ENCODE measurements at regions of chr5 and their contacts with region 1.

Region 1: GRCh38 chr5:135203593-135204036 is 169.6 kb upstream of the PITX1 start:
- DNase-seq: no peak
- H3K4me3 ChIP-seq: no peak overlapping the region
- H3K27ac ChIP-seq: no peak overlapping the region
- H3K4me1 ChIP-seq: 0 out of 4 replicates have a peak, but pooled peaks cover 0 to 8% of the 10 kb centered on the region in 2 experiments
- H3K27me3 ChIP-seq: no peaks in the 10 kb centered on the region
- CTCF ChIP-seq: peak; percentile 51
- EP300 ChIP-seq: no peak
- RAD21 ChIP-seq: peak; percentile 57

Region 2: DNA sequence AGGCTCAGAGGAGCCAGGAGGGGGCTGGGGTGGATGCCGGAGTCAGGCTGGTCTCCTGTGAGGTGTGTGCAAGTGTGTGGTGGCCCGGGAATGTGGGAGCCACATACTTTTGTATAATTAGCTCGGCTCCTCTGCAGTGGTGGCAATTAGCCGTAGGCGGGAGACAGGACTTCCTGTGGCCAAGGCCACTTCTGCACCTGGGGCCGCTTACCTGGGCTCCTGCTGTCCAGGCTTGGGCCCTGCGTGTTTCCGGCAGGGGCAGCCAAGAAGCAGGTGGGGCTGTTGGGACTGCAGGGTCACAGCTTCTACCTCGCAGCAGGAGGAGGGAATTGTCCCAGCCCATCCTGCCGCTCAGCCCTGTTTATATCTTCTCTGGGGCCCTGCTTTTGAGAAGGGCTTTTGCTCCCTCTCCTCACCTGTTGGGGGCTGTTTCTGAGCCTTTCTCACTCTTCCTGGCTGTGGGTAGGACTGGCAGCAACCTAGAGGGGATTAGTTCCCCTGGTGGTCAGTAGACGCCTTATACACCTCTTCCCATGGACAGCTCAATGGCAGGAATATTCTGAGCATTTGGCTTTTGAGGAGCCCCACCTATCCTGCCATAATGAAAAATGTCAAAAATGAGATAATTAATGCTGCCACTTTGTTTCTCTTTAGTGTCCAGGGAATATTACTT is 24.2 kb before region 1 on chr5:
- CTCF ChIA-PET with region 1: interaction called, 10 read pairs
- POLR2A ChIA-PET with region 1: no interaction called
- DNase-seq: no peak
- H3K4me3 ChIP-seq: no peak overlapping the region
- H3K27ac ChIP-seq: no peak overlapping the region
- H3K4me1 ChIP-seq: no peaks in the 10 kb centered on the region
- H3K27me3 ChIP-seq: no peaks in the 10 kb centered on the region; the same call in 1 of the 2 replicates
- CTCF ChIP-seq: no peak
- EP300 ChIP-seq: no peak
- RAD21 ChIP-seq: no peak

Region 3: GRCh38 chr5:135214897-135215616 is 11.4 kb after region 1 on chr5:
- CTCF ChIA-PET with region 1: interaction called, 11 read pairs
- POLR2A ChIA-PET with region 1: no interaction called
- DNase-seq: peak; percentile 3
- H3K4me3 ChIP-seq: no peak overlapping the region
- H3K27ac ChIP-seq: no peak overlapping the region
- H3K4me1 ChIP-seq: peaks cover 13 to 15% of the 10 kb centered on the region in 2 experiments; a peak in 2 of 4 replicates
- H3K27me3 ChIP-seq: no peaks in the 10 kb centered on the region
- CTCF ChIP-seq: no peak
- EP300 ChIP-seq: no peak
- RAD21 ChIP-seq: no peak

Measured in SK-N-SH (cell line).